ENCODE measurements at regions of chr6 and their contacts with region 1.

Region 1: GRCh38 chr6:152973916-152974315 is 8.9 kb downstream of the FBXO5 start:
- DNase-seq: no peak
- H3K4me3 ChIP-seq: no peak overlapping the region
- H3K27ac ChIP-seq: no peak overlapping the region
- H3K4me1 ChIP-seq: peaks cover under 1% of the 10 kb centered on the region
- H3K27me3 ChIP-seq: no peaks in the 10 kb centered on the region
- CTCF ChIP-seq: no peak

Region 2: GRCh38 chr6:154139892-154140291 is 1166.0 kb after region 1 on chr6:
- CTCF ChIA-PET with region 1: interaction called, 11 read pairs
- POLR2A ChIA-PET with region 1: no interaction called
- intact Hi-C with region 1: no loop called
- DNase-seq: no peak
- H3K4me3 ChIP-seq: no peak overlapping the region
- H3K27ac ChIP-seq: no peak overlapping the region
- H3K4me1 ChIP-seq: no peaks in the 10 kb centered on the region
- H3K27me3 ChIP-seq: no peaks in the 10 kb centered on the region
- CTCF ChIP-seq: no peak